Activated CD4-positive, alpha-beta memory T cell treated with anti-CD3 and anti-CD28 coated beads for 36 hours (primary cell): ENCODE measurements at regions of chr21 and their contacts with region 1.

Region 1: GRCh38 chr21:42614811-42615659 is 38.4 kb upstream of the PDE9A start:
- DNase-seq: peak; percentile 79
- H3K4me3 Mint-ChIP-seq: no peak overlapping the region
- H3K27ac Mint-ChIP-seq: no peak overlapping the region
- H3K4me1 Mint-ChIP-seq: peaks cover 8% of the 10 kb centered on the region
- H3K27me3 Mint-ChIP-seq: no peaks in the 10 kb centered on the region

Region 2: DNA sequence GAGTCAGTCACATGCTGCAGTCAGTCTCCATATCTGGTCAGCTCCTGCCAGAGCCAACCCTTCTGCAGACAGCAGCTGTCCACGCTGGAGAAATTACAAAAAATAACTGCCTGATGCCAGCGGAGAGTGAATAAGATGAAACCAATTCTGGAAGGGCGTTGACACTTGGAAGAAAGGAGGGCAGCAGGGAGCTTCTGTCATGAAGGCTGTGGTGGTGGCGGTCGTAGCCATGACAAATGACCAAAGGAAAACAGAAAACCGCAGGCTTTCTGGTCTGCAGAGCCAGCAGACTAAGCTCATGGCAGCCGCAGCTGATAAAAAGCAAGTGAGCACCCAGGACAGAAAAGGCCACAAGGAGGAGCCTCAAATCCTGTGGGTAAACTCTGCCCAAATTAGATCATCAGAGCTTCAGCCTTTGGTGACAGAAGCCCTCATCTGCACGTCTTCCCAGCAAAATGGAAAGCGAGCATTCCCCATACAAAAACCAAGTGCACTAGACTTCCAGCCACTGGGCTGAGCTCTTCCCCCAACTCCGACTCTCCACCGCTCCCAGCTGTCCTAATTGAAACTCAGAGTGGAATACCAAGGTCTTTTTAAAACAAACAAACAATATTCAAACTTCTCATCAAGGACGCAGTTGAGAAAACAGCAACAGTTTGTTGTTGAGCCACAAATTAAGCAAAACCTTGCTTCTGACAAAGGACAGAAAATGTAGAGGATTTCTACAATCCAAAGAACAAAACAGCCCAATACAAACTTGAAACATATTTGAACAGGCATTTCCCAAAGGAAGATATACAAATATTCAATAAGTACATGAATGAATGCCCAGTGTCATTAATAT is 147.7 kb before region 1 on chr21:
- CTCF ChIA-PET with region 1: no interaction called
- POLR2A ChIA-PET with region 1: no interaction called
- intact Hi-C with region 1: loop called (anchors 10 kb)
- DNase-seq: peak; percentile 28
- H3K4me3 Mint-ChIP-seq: no peak overlapping the region
- H3K27ac Mint-ChIP-seq: no peak overlapping the region
- H3K4me1 Mint-ChIP-seq: peaks cover 38% of the 10 kb centered on the region
- H3K27me3 Mint-ChIP-seq: no peaks in the 10 kb centered on the region

Region 3: DNA sequence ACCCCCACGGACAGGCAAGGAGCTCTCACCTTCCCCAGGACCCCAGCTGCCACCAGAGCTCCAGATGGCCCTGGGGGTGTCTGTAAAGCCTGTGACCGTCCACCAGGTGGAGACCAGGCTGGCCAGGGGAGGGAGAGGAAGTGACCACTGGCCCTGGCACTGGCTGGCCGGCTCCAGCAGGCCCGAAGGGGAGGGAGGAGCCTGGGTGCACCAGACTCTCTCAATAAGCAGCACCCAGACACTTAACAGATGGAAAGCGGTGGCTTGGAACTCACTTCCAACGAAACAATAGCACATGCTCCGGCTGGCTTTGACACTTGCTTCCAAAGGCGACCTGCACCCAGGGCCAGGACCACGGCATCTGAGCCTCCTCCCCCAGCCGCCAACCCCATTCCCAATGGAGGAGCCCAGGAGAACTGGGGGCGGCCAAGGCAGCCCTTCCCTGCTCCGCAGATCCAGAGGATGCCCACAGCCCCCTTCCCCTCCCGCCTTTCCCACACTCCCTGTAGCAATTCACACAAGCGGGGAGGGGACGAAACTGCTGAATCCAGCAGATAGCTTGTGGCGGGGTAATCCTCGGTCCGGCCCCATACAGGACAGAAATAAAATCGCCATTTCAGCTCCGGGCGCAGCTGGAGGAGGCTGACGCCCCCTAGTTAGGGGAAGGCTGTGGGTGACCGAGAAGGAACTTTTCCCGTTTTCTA is 37.6 kb after region 1 on chr21:
- CTCF ChIA-PET with region 1: no interaction called
- POLR2A ChIA-PET with region 1: interaction called, 3 read pairs
- intact Hi-C with region 1: loop called (anchors 5 kb)
- DNase-seq: no peak
- H3K4me3 Mint-ChIP-seq: peak overlapping the region; percentile 70
- H3K27ac Mint-ChIP-seq: no peak overlapping the region
- H3K4me1 Mint-ChIP-seq: peaks cover 11% of the 10 kb centered on the region
- H3K27me3 Mint-ChIP-seq: peaks cover 14% of the 10 kb centered on the region

Region 4: DNA sequence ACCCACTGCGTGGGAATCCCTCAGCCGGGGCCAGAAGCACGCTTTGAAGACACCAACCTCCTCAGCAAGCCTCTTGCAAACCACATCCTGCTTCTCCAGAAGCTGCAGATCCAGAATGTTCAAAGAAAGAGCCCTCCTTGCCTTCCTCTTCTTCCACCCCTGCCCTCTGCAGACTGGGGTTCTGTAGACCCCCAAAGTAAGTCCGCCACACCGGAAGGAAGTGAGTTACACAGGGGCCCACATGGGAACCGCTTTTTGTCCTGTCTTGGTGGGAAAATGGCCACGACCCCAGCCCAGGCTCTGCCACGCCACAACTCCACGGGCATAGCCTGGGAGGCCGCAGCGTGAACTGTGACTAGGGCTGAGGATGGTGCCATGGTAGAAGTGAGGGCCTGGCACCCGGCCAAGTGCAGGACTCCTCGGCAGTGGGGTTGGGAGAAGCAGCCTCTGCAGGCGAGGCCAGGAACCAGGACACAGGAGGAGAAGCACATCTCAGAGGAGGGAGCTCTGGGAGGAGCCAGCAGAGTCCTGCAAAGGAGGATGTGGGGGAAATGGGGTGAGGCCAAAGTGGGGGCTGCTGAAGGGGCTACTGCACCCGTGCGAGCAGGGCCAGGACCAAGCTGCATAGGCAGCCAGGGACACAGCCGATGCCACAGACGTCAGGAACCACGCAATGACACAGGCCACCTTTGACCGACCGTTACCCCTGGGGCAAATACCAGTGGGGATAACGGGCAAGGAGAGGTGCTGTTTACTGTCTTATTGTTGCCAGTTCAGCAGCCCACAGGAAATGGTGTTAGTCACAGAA is 69.3 kb after region 1 on chr21:
- CTCF ChIA-PET with region 1: no interaction called
- POLR2A ChIA-PET with region 1: no interaction called
- intact Hi-C with region 1: loop called (anchors 2 kb)
- DNase-seq: peak; percentile 77
- H3K4me3 Mint-ChIP-seq: peak overlapping the region; percentile 72
- H3K27ac Mint-ChIP-seq: peak overlapping the region; percentile 88
- H3K4me1 Mint-ChIP-seq: peaks cover 47% of the 10 kb centered on the region
- H3K27me3 Mint-ChIP-seq: peaks cover 4% of the 10 kb centered on the region

Region 5: DNA sequence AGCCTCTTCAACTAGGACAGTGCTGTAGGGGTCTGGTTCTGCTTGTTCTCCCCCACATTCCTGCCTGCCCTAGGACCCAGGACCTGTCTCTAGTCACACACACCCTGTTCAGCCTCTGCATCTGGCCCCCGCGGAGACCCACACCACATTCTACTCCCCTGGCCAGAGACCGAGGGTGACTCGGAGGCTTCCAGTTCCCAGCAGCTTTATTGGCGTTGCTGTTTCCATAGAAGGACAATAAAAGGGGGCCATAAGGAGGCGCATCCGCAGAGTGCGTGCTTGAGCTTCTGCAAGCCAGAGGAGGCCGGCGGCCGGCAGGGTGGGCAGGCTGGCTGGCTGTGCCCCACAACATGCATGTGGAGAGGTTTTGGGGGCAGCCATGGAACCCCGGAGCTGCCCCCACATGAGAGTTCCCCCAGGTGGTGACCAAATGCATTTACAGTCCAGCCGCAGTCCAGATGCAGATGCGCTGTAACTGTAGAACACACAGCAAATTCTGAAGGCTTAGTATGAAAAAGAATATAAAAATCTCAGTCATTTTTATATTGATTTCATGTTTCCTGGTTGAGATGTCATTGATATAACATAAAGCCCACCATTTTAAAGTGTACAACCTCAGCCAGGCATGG is 90.8 kb after region 1 on chr21:
- CTCF ChIA-PET with region 1: no interaction called
- POLR2A ChIA-PET with region 1: no interaction called
- intact Hi-C with region 1: no loop called
- DNase-seq: no peak
- H3K4me3 Mint-ChIP-seq: no peak overlapping the region
- H3K27ac Mint-ChIP-seq: no peak overlapping the region
- H3K4me1 Mint-ChIP-seq: no peaks in the 10 kb centered on the region
- H3K27me3 Mint-ChIP-seq: no peaks in the 10 kb centered on the region

Region 6: GRCh38 chr21:42833439-42833815 is 218.4 kb after region 1 on chr21:
- CTCF ChIA-PET with region 1: no interaction called
- POLR2A ChIA-PET with region 1: no interaction called
- intact Hi-C with region 1: loop called (anchors 5 kb)
- DNase-seq: peak; percentile 83
- H3K4me3 Mint-ChIP-seq: peak overlapping the region; percentile 16
- H3K27ac Mint-ChIP-seq: no peak overlapping the region
- H3K4me1 Mint-ChIP-seq: peaks cover 35% of the 10 kb centered on the region
- H3K27me3 Mint-ChIP-seq: peaks cover 9% of the 10 kb centered on the region